ENCODE measurements at regions of chr7 and their contacts with region 1.

Region 1: DNA sequence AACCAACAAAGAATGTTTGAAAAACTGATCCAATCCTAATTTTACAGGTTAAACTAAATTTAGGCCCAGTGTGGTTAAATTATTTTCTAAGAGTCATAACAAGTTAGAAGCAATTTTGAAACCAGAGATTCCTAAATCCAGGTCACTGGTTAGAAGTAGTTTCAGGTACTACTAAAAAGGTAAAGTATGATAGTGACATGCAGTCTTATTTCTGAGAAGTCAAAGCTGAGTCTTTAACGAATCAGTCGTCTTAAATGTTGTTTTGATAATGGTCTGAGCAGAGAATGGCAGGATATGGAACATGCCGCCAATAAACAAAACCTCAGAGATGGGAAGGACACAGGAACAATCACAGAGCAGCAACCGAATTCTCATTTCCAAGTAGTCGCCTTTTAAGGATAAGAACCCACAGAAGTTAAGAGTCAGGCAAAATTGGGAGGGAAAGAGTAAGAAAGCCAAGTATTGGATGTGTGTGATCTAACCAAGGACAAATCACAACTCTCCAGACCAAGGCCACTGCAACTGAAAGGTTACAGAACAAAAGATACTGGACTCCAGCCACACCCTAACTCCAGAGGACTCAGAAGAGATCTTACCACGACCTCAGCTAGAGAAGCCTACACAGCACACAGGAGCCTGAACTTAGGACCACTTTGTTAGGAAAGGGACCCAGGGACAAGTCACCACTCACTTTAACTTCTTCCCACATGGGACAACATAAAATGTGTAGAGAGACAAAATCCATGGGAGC is 19.7 kb downstream of the TMEM243 start:
- DNase-seq: no peak
- ATAC-seq: no peak

Region 2: GRCh38 chr7:87059525-87060287 is 140.2 kb before region 1 on chr7 and contains the start of gene ELAPOR2:
- intact Hi-C with region 1: no loop called
- DNase-seq: peak; percentile 85
- ATAC-seq: peak; percentile 98
- total RNA-seq, gene ELAPOR2: 6.4 TPM

Region 3: GRCh38 chr7:87159538-87159937 is 40.3 kb before region 1 on chr7:
- intact Hi-C with region 1: loop called (anchors 5 kb)
- DNase-seq: no peak
- ATAC-seq: no peak

Region 4: GRCh38 chr7:87219545-87220025 is 19.7 kb after region 1 on chr7 and contains the start of gene TMEM243:
- intact Hi-C with region 1: loop called (anchors 2 kb)
- DNase-seq: peak; percentile 92
- ATAC-seq: peak; percentile 91
- total RNA-seq, gene TMEM243: 5.9 TPM

Measured in Right ventricle myocardium inferior (tissue), 1 donor.